ENCODE measurements at regions of chr6 and their contacts with region 1.

Region 1: GRCh38 chr6:5143634-5144311 is 58.6 kb downstream of the PPP1R3G start:
- DNase-seq: peak; percentile 55
- H3K4me3 ChIP-seq: no peak overlapping the region
- H3K27ac ChIP-seq: no peak overlapping the region
- H3K4me1 ChIP-seq: no peaks in the 10 kb centered on the region
- H3K27me3 ChIP-seq: no peaks in the 10 kb centered on the region
- CTCF ChIP-seq: peak; percentile 91

Region 2: GRCh38 chr6:5053038-5053437 is 90.7 kb before region 1 on chr6:
- CTCF ChIA-PET with region 1: no interaction called
- dilution Hi-C with region 1: no loop called
- in situ Hi-C with region 1: no loop called
- intact Hi-C with region 1: loop called (anchors 1 kb)
- DNase-seq: no peak
- H3K4me3 ChIP-seq: no peak overlapping the region
- H3K27ac ChIP-seq: no peak overlapping the region
- H3K4me1 ChIP-seq: no peaks in the 10 kb centered on the region
- H3K27me3 ChIP-seq: no peaks in the 10 kb centered on the region
- CTCF ChIP-seq: no peak

Region 3: GRCh38 chr6:5260661-5261544 is 117.1 kb after region 1 on chr6 and contains the starts of genes FARS2 and LYRM4:
- CTCF ChIA-PET with region 1: no interaction called
- dilution Hi-C with region 1: no loop called
- in situ Hi-C with region 1: no loop called
- intact Hi-C with region 1: loop called (anchors 5 kb)
- DNase-seq: peak; percentile 90
- H3K4me3 ChIP-seq: peak within 1 kb of the TSS; percentile 77 to 90 (median 84)
- H3K27ac ChIP-seq: peak within 1 kb of the TSS; percentile 96
- H3K4me1 ChIP-seq: peaks cover 19% of the 10 kb centered on the region
- H3K27me3 ChIP-seq: no peaks in the 10 kb centered on the region
- CTCF ChIP-seq: peak in 1 of 2 donors; percentile 32
- total RNA-seq, gene FARS2: 18.0 to 32.2 TPM
- total RNA-seq, gene LYRM4: 13.7 to 42.3 TPM

Region 4: DNA sequence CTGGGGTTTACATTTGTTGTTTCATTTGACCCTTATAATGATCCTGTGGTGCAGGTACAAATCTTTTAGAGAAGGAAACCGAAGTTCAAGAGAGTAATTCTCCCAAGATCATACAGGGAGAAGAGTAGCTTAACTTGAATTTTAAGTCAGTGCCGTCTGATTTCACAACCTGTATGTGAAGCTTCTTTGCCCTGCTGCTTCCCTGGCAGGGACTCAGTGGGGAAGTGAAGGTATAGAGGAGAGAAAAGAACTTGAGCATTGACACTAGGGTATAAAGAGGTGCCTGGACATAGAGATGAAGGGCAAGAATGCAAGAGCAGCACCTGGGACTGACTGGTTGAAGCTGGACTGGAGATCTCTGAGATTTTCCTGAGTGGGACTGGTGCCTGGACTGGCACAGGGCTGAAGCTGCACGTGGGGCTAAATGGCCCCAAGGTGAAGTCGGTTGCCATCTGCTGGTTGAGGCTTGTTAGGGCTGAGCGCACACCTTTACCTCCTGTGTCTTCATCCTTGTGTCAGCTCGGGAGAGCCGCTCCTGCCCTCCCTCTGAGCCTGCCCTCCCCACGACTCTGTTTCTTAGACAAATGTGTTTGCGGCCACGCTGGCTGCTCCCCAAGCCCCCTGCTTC is 159.3 kb after region 1 on chr6:
- CTCF ChIA-PET with region 1: interaction called, 9 read pairs
- dilution Hi-C with region 1: no loop called
- in situ Hi-C with region 1: no loop called
- intact Hi-C with region 1: loop called (anchors 1 kb)
- DNase-seq: peak; percentile 77
- H3K4me3 ChIP-seq: no peak overlapping the region
- H3K27ac ChIP-seq: no peak overlapping the region
- H3K4me1 ChIP-seq: peaks cover 10% of the 10 kb centered on the region
- H3K27me3 ChIP-seq: no peaks in the 10 kb centered on the region
- CTCF ChIP-seq: peak; percentile 87 to 93

Region 5: DNA sequence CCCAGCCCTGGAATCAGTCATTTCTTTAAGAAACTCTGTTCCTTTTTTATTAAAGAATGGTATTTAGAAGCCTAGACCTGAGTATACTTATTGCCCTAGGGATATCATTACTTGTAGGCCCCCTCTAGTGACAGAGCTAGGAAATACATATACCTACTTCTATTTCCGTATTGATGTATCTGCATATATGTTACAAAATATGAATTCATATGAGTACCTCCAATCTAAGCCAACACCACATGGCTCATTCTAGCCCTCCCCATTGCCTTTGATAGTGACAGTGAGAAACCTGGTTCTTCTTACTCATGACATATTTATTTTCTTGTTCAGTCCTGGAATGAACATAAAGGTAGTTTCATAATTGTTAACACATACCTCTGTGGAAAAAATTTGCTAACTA is 254.8 kb after region 1 on chr6:
- CTCF ChIA-PET with region 1: no interaction called
- dilution Hi-C with region 1: no loop called
- in situ Hi-C with region 1: no loop called
- intact Hi-C with region 1: loop called (anchors 1 kb)
- DNase-seq: peak; percentile 56
- H3K4me3 ChIP-seq: no peak overlapping the region
- H3K27ac ChIP-seq: no peak overlapping the region
- H3K4me1 ChIP-seq: peaks cover 11% of the 10 kb centered on the region
- H3K27me3 ChIP-seq: no peaks in the 10 kb centered on the region
- CTCF ChIP-seq: peak; percentile 60 to 65

Measured in mammary epithelial cell (primary cell).